ENCODE measurements at regions of chr3 and their contacts with region 1.

Region 1: DNA sequence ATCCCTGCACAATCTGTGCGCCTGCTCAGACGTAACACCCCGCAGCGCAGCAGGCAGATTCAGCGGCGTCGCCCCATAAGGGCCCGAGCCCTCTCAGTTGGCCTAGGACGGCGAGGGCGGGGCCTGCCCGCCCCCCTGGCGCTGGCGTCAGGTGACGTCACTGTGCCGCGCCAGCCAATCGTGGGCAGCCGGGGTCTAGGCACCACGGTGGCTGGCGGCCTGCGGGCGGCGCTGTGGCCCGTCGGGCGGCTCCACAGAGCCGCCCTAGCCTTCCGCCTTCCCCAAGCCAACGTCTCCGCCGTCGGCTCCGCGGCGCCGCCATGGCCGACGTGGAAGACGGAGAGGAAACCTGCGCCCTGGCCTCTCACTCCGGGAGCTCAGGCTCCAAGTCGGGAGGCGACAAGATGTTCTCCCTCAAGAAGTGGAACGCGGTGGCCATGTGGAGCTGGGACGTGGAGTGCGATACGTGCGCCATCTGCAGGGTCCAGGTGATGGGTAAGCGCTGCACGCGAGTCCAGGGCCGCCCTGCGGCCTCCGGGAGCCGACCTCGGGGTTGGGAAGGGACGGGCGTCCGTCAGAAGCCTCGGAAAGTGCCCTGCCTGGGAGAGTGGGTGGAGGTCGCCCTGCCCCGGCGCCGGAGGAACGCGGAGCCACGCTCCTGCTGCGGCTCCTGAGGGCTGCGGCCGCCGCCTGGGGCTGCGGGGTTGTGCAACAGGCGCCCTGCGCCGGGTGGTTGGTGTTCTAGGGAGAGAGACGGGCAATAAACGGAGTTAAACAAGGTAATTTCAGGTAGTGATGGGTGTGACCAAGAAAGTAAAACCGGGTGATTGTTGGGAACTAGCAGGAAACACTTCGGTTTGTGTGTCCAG is at the start of gene RNF7:
- DNase-seq: peak; percentile 98
- ATAC-seq: peak; percentile 95
- H3K4me3 ChIP-seq: peak within 1 kb of the TSS; percentile 93 to 99 (median 95)
- H3K4me3 Mint-ChIP-seq: peak within 1 kb of the TSS; percentile 90
- H3K27ac ChIP-seq: peak within 1 kb of the TSS; percentile 81 to 87
- H3K27ac Mint-ChIP-seq: peak within 1 kb of the TSS; percentile 97
- H3K4me1 ChIP-seq: peaks cover 23 to 30% of the 10 kb centered on the region in 2 donors
- H3K4me1 Mint-ChIP-seq: peaks cover 44% of the 10 kb centered on the region
- H3K27me3 ChIP-seq: no peaks in the 10 kb centered on the region
- H3K27me3 Mint-ChIP-seq: no peaks in the 10 kb centered on the region
- CTCF ChIP-seq: peak; percentile 85
- total RNA-seq, gene RNF7: 40.9 and 47.2 TPM in 2 replicates

Region 2: DNA sequence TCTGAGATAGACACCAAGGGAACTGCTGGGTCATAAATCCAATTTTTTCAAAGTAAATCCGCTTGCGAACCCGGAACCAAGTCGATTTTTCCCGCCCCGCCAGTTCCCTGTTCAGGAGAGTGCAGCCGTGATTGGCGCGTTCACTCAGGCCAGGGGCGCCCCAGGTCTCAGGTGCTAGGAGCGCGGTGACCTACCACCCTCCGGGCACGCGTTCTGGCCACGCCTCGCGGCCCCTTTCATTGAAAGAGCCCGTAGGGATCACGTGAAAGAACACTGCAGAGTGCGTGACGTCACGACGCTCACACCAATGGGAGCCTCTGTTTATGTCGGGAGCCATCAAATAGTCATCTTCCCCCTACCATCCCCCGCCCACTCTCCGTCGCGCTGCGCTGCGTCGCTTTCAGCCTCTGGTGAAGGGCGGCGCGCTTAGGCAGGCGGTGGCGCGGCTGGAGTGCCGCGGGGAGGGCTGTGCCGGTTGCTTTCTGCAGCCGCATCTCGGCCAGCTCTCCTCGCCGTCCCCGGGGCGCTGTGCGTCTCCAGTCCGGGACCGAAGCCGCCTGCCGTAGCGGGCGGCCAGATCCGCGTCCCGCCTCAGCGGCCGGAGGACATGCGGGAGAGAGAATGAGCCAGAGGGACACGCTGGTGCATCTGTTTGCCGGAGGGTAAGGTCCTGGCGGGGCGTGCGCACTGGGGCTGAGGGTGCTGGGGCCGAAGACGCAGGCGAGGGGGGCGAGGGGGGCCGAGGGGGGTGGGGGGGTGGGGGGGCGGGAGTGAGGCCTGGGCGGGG is 796.6 kb before region 1 on chr3 and contains the start of gene SLC25A36:
- CTCF ChIA-PET with region 1: no interaction called
- POLR2A ChIA-PET with region 1: no interaction called
- intact Hi-C with region 1: loop called (anchors 1 kb)
- DNase-seq: peak; percentile 99
- ATAC-seq: peak; percentile 96
- H3K4me3 ChIP-seq: peak within 1 kb of the TSS; percentile 63 to 86 (median 80)
- H3K4me3 Mint-ChIP-seq: peak within 1 kb of the TSS; percentile 95
- H3K27ac ChIP-seq: peak within 1 kb of the TSS; percentile 91 to 95
- H3K27ac Mint-ChIP-seq: peak within 1 kb of the TSS; percentile 97
- H3K4me1 ChIP-seq: peaks cover 11 to 26% of the 10 kb centered on the region in 2 donors
- H3K4me1 Mint-ChIP-seq: peaks cover 42% of the 10 kb centered on the region
- H3K27me3 ChIP-seq: no peaks in the 10 kb centered on the region
- H3K27me3 Mint-ChIP-seq: no peaks in the 10 kb centered on the region
- CTCF ChIP-seq: no peak
- total RNA-seq, gene SLC25A36: 76.0 and 86.3 TPM in 2 replicates

Region 3: GRCh38 chr3:141487521-141488252 is 250.6 kb before region 1 on chr3:
- CTCF ChIA-PET with region 1: no interaction called
- POLR2A ChIA-PET with region 1: no interaction called
- intact Hi-C with region 1: loop called (anchors 5 kb)
- DNase-seq: peak; percentile 91
- ATAC-seq: peak; percentile 70
- H3K4me3 ChIP-seq: peak overlapping the region; percentile 48 to 96 (median 67)
- H3K4me3 Mint-ChIP-seq: peak overlapping the region; percentile 88
- H3K27ac ChIP-seq: peak overlapping the region; percentile 83 to 91
- H3K27ac Mint-ChIP-seq: peak overlapping the region; percentile 93
- H3K4me1 ChIP-seq: peaks cover 45 to 66% of the 10 kb centered on the region in 2 donors
- H3K4me1 Mint-ChIP-seq: peaks cover 70% of the 10 kb centered on the region
- H3K27me3 ChIP-seq: no peaks in the 10 kb centered on the region
- H3K27me3 Mint-ChIP-seq: no peaks in the 10 kb centered on the region
- CTCF ChIP-seq: no peak

Region 4: DNA sequence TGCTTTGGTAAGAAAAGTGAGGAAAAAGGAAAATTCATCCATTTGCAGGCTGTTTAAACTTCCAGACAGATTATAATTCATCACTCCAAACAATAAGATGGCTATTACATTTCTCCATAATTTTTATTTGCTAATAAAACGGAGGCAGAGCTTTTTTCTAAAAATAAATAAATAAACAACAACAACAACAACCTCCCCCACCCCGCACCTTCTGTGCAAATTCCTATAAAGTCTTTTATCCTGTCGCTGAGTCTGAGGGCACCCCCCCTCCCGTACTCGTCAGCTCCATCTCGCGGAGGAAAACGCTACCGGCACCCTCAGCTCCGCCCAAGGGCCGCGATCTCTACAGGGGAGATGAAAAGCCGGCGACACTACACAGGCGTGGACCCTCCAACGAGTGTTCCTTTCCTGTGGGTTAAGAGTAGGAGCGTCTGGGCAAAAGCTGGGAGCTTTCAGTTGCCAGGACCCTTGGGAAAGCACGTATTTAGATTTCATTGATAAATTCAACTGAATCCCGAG is 137.2 kb after region 1 on chr3:
- CTCF ChIA-PET with region 1: interaction called, 24 read pairs
- POLR2A ChIA-PET with region 1: interaction called, 11 read pairs
- intact Hi-C with region 1: loop called (anchors 1 kb)
- DNase-seq: peak; percentile 87
- ATAC-seq: peak; percentile 63
- H3K4me3 ChIP-seq: peak overlapping the region; percentile 74 to 89 (median 79)
- H3K4me3 Mint-ChIP-seq: peak overlapping the region; percentile 90
- H3K27ac ChIP-seq: peak overlapping the region; percentile 90 to 98
- H3K27ac Mint-ChIP-seq: peak overlapping the region; percentile 90
- H3K4me1 ChIP-seq: peaks cover 8 to 15% of the 10 kb centered on the region in 2 donors
- H3K4me1 Mint-ChIP-seq: peaks cover 28% of the 10 kb centered on the region
- H3K27me3 ChIP-seq: no peaks in the 10 kb centered on the region
- H3K27me3 Mint-ChIP-seq: no peaks in the 10 kb centered on the region
- CTCF ChIP-seq: peak; percentile 90

Region 5: DNA sequence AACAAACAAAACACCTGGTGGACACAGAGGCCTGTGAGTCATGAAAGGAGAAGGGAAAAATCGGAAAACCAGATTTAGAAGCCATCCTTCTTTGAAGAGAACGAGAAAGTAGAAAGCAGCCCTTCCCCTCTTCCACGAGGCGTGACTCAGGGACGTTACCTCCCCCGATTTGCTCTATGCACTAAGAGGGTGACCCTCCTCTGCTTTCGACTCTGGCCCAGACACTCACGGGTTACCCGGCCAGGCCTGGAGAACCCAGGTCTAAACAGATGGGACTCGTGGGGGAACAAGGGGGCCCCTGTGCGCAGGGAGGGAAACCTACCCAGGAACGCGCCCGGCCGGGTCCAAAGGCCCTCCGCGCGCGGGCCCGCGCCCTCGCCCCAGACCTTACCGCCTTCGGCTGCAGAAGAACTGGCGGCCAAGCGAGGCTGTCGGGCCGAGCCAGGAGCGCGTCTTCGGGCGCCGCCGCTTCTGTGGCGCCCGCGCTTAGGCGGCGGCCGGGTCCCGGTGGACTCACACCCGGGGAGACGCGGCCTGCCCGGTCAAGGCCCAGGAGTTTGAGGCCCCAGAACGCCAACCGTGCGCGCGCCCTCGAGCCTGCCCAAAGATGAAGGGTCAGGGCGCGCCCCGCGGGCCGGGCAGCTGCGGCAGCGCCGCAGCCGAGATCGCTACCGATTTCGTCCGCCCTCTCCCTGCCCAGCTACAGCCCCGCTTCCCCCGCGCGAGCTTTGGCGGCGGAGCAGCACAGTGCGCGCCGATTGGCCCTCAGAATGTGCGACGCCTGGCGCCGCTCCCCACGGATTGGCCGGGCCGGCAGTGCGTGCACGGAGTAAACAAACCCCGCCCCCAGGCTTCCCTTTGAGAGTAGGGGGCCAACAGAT is 410.8 kb after region 1 on chr3 and contains the start of gene TFDP2:
- CTCF ChIA-PET with region 1: no interaction called
- POLR2A ChIA-PET with region 1: no interaction called
- intact Hi-C with region 1: loop called (anchors 2 kb)
- DNase-seq: peak; percentile 88
- ATAC-seq: peak; percentile 98
- H3K4me3 ChIP-seq: peak within 1 kb of the TSS; percentile 56 to 85 (median 74)
- H3K4me3 Mint-ChIP-seq: peak within 1 kb of the TSS; percentile 88
- H3K27ac ChIP-seq: peak within 1 kb of the TSS in 1 of 2 donors; percentile 76
- H3K27ac Mint-ChIP-seq: peak within 1 kb of the TSS; percentile 87
- H3K4me1 ChIP-seq: peaks cover 7 to 15% of the 10 kb centered on the region in 2 donors
- H3K4me1 Mint-ChIP-seq: peaks cover 19% of the 10 kb centered on the region
- H3K27me3 ChIP-seq: no peaks in the 10 kb centered on the region
- H3K27me3 Mint-ChIP-seq: no peaks in the 10 kb centered on the region
- CTCF ChIP-seq: no peak
- total RNA-seq, gene TFDP2: 31.7 and 32.9 TPM in 2 replicates

Region 6: GRCh38 chr3:142578327-142579223 is 840.3 kb after region 1 on chr3 and contains the start of gene ATR:
- CTCF ChIA-PET with region 1: no interaction called
- POLR2A ChIA-PET with region 1: no interaction called
- intact Hi-C with region 1: loop called (anchors 5 kb)
- DNase-seq: peak; percentile 97
- ATAC-seq: peak; percentile 94
- H3K4me3 ChIP-seq: peak within 1 kb of the TSS; percentile 70 to 91 (median 78)
- H3K4me3 Mint-ChIP-seq: peak within 1 kb of the TSS; percentile 93
- H3K27ac ChIP-seq: peak within 1 kb of the TSS; percentile 97 to 98
- H3K27ac Mint-ChIP-seq: peak within 1 kb of the TSS; percentile 98
- H3K4me1 ChIP-seq: peaks cover 27% of the 10 kb centered on the region in 2 donors
- H3K4me1 Mint-ChIP-seq: peaks cover 47% of the 10 kb centered on the region
- H3K27me3 ChIP-seq: peaks cover 0 to 7% (median 0%) of the 10 kb centered on the region in 4 experiments
- H3K27me3 Mint-ChIP-seq: peaks cover 9% of the 10 kb centered on the region
- CTCF ChIP-seq: no peak
- total RNA-seq, gene ATR: 46.7 and 47.4 TPM in 2 replicates